HEK293 (cell line): ENCODE measurements at regions of chr14 and their contacts with region 1.

Region 1: GRCh38 chr14:23186913-23187654 is 3.6 kb upstream of the SLC7A8 start:
- H3K4me3 ChIP-seq: no peak overlapping the region
- H3K27ac ChIP-seq: no peak overlapping the region
- H3K4me1 ChIP-seq: no peaks in the 10 kb centered on the region; the same call in 1 of the 2 replicates
- CTCF ChIP-seq: 0 out of 2 replicates have a peak, but pooled peaks have one; percentile 39

Region 2: DNA sequence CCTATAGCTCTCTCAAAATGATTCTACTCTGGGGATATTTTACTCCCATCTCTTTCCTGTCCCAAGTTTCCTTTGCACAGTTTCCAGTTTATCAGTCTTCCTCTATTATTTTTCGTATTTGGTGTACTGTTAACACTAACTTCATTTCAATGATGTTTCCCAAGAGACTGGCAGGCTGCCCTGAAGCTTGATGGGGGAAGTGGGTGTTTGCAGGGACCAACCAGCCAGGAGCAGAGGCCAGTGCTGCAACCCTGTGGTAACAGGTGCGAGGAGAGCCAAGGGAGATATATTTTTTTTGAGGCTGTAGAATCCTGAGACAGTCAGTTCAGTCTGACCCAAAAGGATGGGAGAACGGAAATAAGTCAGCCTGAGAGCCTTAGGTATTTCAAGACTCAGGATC is 56.2 kb before region 1 on chr14:
- CTCF ChIA-PET with region 1: interaction called, 424 read pairs
- POLR2A ChIA-PET with region 1: no interaction called
- H3K4me3 ChIP-seq: no peak overlapping the region
- H3K27ac ChIP-seq: no peak overlapping the region
- H3K4me1 ChIP-seq: no peaks in the 10 kb centered on the region
- CTCF ChIP-seq: no peak

Region 3: DNA sequence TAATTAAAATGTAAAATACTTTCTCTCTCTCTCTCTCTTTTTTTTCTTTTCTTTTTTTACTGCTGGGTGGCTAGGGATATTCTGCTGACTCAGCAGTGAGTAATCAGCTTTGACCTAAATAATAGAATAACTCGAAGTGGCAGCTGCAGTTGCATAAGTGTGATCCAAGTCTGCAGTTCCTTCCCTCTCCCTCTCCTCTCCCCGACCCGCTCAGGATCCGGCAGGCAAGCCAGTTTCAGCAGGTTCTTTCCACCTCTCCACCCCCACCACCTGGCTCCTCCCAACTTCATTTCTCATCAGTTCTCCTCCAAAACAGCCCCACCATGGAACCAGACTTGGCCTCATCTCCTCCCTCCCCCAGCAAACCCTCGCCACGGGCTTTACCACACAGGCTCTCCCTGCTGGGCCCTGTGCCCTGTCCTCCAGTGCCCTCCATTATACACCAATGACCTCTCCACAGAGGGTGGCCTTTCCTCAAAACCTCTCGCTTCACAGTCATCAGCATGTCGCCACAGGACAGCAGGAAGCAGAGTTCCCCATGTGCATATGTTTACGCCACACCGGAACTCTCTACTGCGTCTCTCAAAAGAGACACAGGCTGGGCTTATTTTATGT is 26.1 kb before region 1 on chr14:
- CTCF ChIA-PET with region 1: interaction called, 14 read pairs
- POLR2A ChIA-PET with region 1: no interaction called
- H3K4me3 ChIP-seq: no peak overlapping the region
- H3K27ac ChIP-seq: no peak overlapping the region
- H3K4me1 ChIP-seq: no peaks in the 10 kb centered on the region; the same call in 1 of the 2 replicates
- CTCF ChIP-seq: no peak

Region 4: GRCh38 chr14:23174276-23175184 is 12.6 kb before region 1 on chr14:
- CTCF ChIA-PET with region 1: interaction called, 22 read pairs
- POLR2A ChIA-PET with region 1: interaction called, 4 read pairs
- H3K4me3 ChIP-seq: no peak overlapping the region
- H3K27ac ChIP-seq: no peak overlapping the region
- H3K4me1 ChIP-seq: peaks cover 23% of the 10 kb centered on the region
- CTCF ChIP-seq: no peak

Region 5: GRCh38 chr14:23306410-23307145 is 119.5 kb after region 1 on chr14 and contains the start of gene BCL2L2:
- CTCF ChIA-PET with region 1: no interaction called
- POLR2A ChIA-PET with region 1: no interaction called
- H3K4me3 ChIP-seq: peak within 1 kb of the TSS; percentile 56
- H3K27ac ChIP-seq: peak within 1 kb of the TSS; percentile 85
- H3K4me1 ChIP-seq: peaks cover 6% of the 10 kb centered on the region; the same call in 1 of the 2 replicates
- CTCF ChIP-seq: no peak